CD8-positive, alpha-beta memory T cell (primary cell): ENCODE measurements at regions of chr3 and their contacts with region 1.

Region 1: GRCh38 chr3:170357176-170357919 is at the start of gene SKIL:
- DNase-seq: peak; percentile 95 to 99 (median 97)
- H3K4me3 ChIP-seq: peak within 1 kb of the TSS; percentile 54
- H3K4me3 Mint-ChIP-seq: peak within 1 kb of the TSS; percentile 89 to 97 (median 91)
- H3K27ac ChIP-seq: peak within 1 kb of the TSS; percentile 92
- H3K27ac Mint-ChIP-seq: peak within 1 kb of the TSS; percentile 95 to 100 (median 99)
- H3K4me1 ChIP-seq: peaks cover 20% of the 10 kb centered on the region
- H3K4me1 Mint-ChIP-seq: peaks cover 30 to 68% (median 52%) of the 10 kb centered on the region in 3 donors
- H3K27me3 ChIP-seq: no peaks in the 10 kb centered on the region
- H3K27me3 Mint-ChIP-seq: peaks cover 0 to 2% of the 10 kb centered on the region in 2 donors
- total RNA-seq, gene SKIL: 25.9 to 29.0 TPM

Region 2: GRCh38 chr3:169772897-169773828 is 584.2 kb before region 1 on chr3 and contains the start of gene MYNN:
- CTCF ChIA-PET with region 1: no interaction called
- POLR2A ChIA-PET with region 1: interaction called, 13 read pairs
- DNase-seq: peak; percentile 85 to 95 (median 92)
- H3K4me3 ChIP-seq: peak within 1 kb of the TSS; percentile 100
- H3K4me3 Mint-ChIP-seq: peak within 1 kb of the TSS; percentile 94 to 100 (median 99)
- H3K27ac ChIP-seq: peak within 1 kb of the TSS; percentile 100
- H3K27ac Mint-ChIP-seq: peak within 1 kb of the TSS; percentile 97 to 100 (median 100)
- H3K4me1 ChIP-seq: peaks cover 25% of the 10 kb centered on the region
- H3K4me1 Mint-ChIP-seq: peaks cover 52 to 73% (median 72%) of the 10 kb centered on the region in 3 donors
- H3K27me3 ChIP-seq: no peaks in the 10 kb centered on the region
- H3K27me3 Mint-ChIP-seq: peaks cover 0 to 13% of the 10 kb centered on the region in 2 donors
- total RNA-seq, gene MYNN: 18.3 to 19.2 TPM

Region 3: GRCh38 chr3:170107941-170108340 is 249.4 kb before region 1 on chr3:
- CTCF ChIA-PET with region 1: no interaction called
- POLR2A ChIA-PET with region 1: no interaction called
- DNase-seq: no peak
- H3K4me3 ChIP-seq: no peak overlapping the region
- H3K4me3 Mint-ChIP-seq: no peak overlapping the region
- H3K27ac ChIP-seq: no peak overlapping the region
- H3K27ac Mint-ChIP-seq: peak overlapping the region in 5 of 8 donors; percentile 5 to 85 (median 32)
- H3K4me1 ChIP-seq: peaks cover 15% of the 10 kb centered on the region
- H3K4me1 Mint-ChIP-seq: peaks cover 24 to 41% (median 33%) of the 10 kb centered on the region in 3 donors
- H3K27me3 ChIP-seq: no peaks in the 10 kb centered on the region
- H3K27me3 Mint-ChIP-seq: no peaks in the 10 kb centered on the region

Region 4: DNA sequence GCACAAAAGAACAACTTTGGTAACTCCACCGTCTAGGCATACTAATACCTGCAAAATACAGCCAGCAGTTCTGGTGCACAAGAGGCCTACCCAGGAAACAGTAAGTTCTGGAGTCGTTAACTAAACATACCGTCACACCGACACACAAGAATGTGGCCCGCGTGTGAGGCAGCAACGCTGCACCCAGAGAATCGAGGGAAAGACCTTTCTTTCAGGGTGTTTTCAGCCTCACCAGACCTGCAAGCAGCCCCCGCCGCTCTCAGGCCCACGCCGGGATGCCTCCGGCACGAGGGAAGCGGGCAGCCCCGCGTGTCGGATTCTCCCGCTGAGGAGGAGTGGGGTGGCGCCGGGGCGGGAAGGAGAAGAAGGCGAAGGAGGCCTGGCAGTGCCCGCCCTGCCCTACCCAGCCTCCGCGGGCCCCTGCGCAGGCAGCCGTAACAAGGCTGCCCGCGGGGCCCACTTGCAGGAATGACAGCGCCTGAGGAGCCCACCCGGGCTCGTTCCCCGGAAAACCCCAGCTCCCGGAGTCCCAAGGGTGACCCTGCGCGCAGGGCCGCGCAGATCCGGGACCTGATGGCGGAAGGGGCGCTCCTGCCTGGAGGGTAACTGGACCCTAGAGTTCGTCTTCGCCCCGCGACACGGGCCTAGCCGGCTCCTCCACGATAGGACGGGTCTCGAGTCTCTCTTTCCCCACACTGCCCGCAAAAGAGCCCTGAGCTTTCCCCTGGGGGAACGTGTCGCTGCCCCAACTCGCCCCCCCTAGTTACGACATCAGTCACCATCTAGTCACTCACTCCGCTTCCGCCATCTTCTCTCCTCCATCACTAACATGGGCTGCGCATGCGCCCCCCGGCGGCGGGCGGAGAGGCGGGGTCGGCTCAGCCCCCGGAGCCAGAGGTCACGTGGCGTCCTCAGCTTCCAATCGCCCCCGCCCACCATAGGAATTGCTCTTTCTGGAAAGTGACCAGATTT is 176.2 kb before region 1 on chr3 and contains the start of gene PHC3:
- CTCF ChIA-PET with region 1: interaction called, 3 read pairs
- POLR2A ChIA-PET with region 1: interaction called, 20 read pairs
- DNase-seq: peak; percentile 85 to 95 (median 92)
- H3K4me3 ChIP-seq: peak within 1 kb of the TSS; percentile 67
- H3K4me3 Mint-ChIP-seq: peak within 1 kb of the TSS; percentile 88 to 100 (median 100)
- H3K27ac ChIP-seq: peak within 1 kb of the TSS; percentile 99
- H3K27ac Mint-ChIP-seq: peak within 1 kb of the TSS; percentile 99 to 100 (median 100)
- H3K4me1 ChIP-seq: peaks cover 29% of the 10 kb centered on the region
- H3K4me1 Mint-ChIP-seq: peaks cover 32 to 43% (median 38%) of the 10 kb centered on the region in 3 donors
- H3K27me3 ChIP-seq: no peaks in the 10 kb centered on the region
- H3K27me3 Mint-ChIP-seq: no peaks in the 10 kb centered on the region
- total RNA-seq, gene PHC3: 55.5 to 58.9 TPM